A673 (cell line): ENCODE measurements at regions of chr2 and their contacts with region 1.

Region 1: GRCh38 chr2:240732184-240732583 is 40.5 kb downstream of the AQP12A start:
- DNase-seq: no peak
- H3K4me3 ChIP-seq: no peak overlapping the region
- H3K27ac ChIP-seq: no peak overlapping the region
- H3K4me1 ChIP-seq: no peaks in the 10 kb centered on the region
- H3K27me3 ChIP-seq: no peaks in the 10 kb centered on the region
- CTCF ChIP-seq: no peak

Region 2: GRCh38 chr2:240789501-240790340 is 57.5 kb after region 1 on chr2:
- CTCF ChIA-PET with region 1: interaction called, 12 read pairs
- POLR2A ChIA-PET with region 1: no interaction called
- intact Hi-C with region 1: no loop called
- DNase-seq: no peak
- H3K4me3 ChIP-seq: no peak overlapping the region
- H3K27ac ChIP-seq: no peak overlapping the region
- H3K4me1 ChIP-seq: no peaks in the 10 kb centered on the region
- H3K27me3 ChIP-seq: no peaks in the 10 kb centered on the region
- CTCF ChIP-seq: no peak